Activated CD4-positive, alpha-beta memory T cell treated with anti-CD3 and anti-CD28 coated beads, Interleukin-2, amount 10 ng/mL, durations not matched to agents 7 days and 5 days (primary cell): ENCODE measurements at regions of chr5 and their contacts with region 1.

Region 1: DNA sequence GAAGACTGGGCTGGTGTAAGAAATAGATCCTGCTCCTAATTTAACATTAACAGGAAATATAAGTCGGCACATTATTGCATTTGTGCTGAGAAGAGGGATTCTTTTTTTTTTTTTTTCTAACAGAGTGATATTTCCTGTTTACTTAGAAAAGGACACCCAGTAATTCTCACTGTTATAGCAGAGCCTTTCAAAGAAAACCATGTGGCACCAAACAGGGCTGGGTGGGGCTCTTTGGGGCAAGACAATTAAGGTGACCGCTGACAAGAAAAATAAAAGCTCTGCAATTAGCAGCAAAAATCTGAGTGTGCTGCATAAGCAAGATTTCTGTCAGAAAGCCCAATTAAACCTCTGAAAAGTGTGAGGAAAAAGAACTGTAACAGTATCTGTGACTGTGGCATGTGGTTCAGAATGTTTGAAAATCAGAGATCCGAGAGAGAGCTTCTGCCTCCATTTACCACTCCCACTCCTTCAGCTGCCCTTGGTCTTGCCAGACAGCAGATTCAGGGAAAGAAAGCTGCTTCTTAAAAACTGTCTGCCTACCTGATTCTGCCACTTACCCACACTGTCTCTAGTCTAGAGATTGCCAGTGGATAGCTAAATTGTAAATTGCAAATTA is 77.1 kb upstream of the IQGAP2 start:
- DNase-seq: peak; percentile 79
- H3K4me3 Mint-ChIP-seq: peak overlapping the region; percentile 44
- H3K27ac Mint-ChIP-seq: peak overlapping the region; percentile 99
- H3K4me1 Mint-ChIP-seq: peaks cover 72% of the 10 kb centered on the region
- H3K27me3 Mint-ChIP-seq: no peaks in the 10 kb centered on the region

Region 2: DNA sequence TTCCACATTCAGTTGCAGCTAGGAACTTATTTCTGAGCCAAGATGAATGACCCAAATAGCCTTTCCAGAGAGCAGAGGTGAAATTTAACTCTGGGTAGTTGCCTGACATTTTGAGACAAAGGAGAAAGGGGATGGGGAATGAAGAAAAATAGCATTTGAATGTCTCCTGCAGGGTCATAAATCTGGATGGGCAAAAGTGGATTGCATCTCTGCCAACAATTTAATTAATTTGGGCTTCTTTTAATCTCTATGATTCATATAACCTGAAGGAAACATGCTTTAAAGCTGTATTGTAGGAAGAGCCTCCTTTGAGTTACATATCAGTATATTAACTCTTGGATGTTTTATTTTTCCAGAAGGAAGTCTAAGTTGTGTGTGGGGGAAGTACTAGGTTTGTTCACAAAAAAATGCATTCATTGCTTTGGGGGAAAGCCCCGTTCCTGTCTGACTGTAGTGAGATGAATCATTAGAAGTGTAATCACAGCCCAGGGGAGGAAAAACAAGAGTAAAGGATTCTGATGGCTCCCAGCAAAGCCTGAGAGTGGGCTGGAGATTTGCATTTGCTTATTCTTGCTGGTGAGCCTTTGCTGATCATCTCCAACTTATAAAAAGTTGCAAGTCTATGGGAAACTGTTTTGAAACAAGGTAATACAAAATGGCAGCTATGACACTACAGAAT is 55.9 kb before region 1 on chr5:
- CTCF ChIA-PET with region 1: interaction called, 4 read pairs
- POLR2A ChIA-PET with region 1: interaction called, 33 read pairs
- DNase-seq: peak; percentile 26
- H3K4me3 Mint-ChIP-seq: peak overlapping the region; percentile 53
- H3K27ac Mint-ChIP-seq: peak overlapping the region; percentile 88
- H3K4me1 Mint-ChIP-seq: peaks cover 37% of the 10 kb centered on the region
- H3K27me3 Mint-ChIP-seq: no peaks in the 10 kb centered on the region

Region 3: GRCh38 chr5:76312783-76313182 is 13.2 kb before region 1 on chr5:
- CTCF ChIA-PET with region 1: interaction called, 9 read pairs
- POLR2A ChIA-PET with region 1: interaction called, 14 read pairs
- DNase-seq: no peak
- H3K4me3 Mint-ChIP-seq: no peak overlapping the region
- H3K27ac Mint-ChIP-seq: no peak overlapping the region
- H3K4me1 Mint-ChIP-seq: peaks cover 2% of the 10 kb centered on the region
- H3K27me3 Mint-ChIP-seq: no peaks in the 10 kb centered on the region